ENCODE measurements at regions of chr9 and their contacts with region 1.

Region 1: DNA sequence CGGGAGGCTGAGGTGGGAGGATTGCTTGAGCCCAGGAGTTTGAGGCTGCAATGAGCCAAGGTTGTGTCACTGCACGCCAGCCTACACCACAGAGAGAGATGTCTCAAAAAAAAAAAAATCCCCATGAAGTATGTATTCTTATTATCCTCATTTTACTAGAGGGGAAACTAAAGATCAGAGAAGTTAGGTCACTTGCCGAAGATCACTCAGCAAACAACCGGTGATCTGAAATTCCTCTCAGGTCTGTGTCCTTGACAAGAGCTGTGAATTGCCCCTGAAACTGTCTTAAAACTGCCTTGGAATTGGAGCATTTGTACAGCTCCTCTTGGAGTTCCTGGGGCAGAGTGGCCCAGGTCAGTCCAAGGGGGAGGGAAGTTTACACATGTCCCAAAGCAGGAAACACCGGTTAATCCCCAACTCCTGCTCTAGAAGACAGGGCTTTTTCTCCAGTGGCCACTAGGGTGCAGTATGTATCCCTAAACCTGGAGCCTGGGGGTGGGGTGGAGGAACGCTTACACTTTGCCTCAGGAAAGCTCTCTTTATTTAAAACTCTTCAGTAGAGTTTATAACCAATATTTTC is 27.6 kb downstream of the AQP7 start:
- DNase-seq: peak in 2 of 3 donors; percentile 53 to 90
- ATAC-seq: peak; percentile 93
- H3K4me3 ChIP-seq: no peak overlapping the region
- H3K4me1 ChIP-seq: peaks cover 5% of the 10 kb centered on the region
- CTCF ChIP-seq: peak; percentile 59

Region 2: GRCh38 chr9:33415501-33416038 is 40.8 kb after region 1 on chr9:
- intact Hi-C with region 1: loop called in 1 of 2 experiments (anchors 2 kb)
- DNase-seq: peak; percentile 92 to 96 (median 92)
- ATAC-seq: peak; percentile 92
- H3K4me3 ChIP-seq: no peak overlapping the region
- H3K4me1 ChIP-seq: peaks cover 14% of the 10 kb centered on the region
- CTCF ChIP-seq: peak; percentile 69

Measured in mucosa of descending colon (tissue), 3 donors.